ENCODE measurements at regions of chr18 and their contacts with region 1.

Region 1: GRCh38 chr18:72086421-72086820 is 457.7 kb downstream of the CBLN2 start:
- DNase-seq: no peak
- ATAC-seq: no peak
- H3K4me3 ChIP-seq: no peak overlapping the region
- H3K27ac ChIP-seq: no peak overlapping the region
- H3K4me1 ChIP-seq: no peaks in the 10 kb centered on the region
- H3K27me3 ChIP-seq: no peaks in the 10 kb centered on the region
- CTCF ChIP-seq: peak; percentile 19 to 40 (median 34); a peak in 2 of 6 replicates
- EP300 ChIP-seq: no peak
- POLR2A ChIP-seq: no peak
- RAD21 ChIP-seq: peak; percentile 36; the same call in 1 of the 2 replicates

Region 2: GRCh38 chr18:70781860-70782453 is 1304.5 kb before region 1 on chr18:
- CTCF ChIA-PET with region 1: no interaction called
- POLR2A ChIA-PET with region 1: no interaction called
- RAD21 ChIA-PET with region 1: no interaction called
- SMC1A ChIA-PET with region 1: no interaction called
- in situ Hi-C with region 1: no loop called
- intact Hi-C with region 1: loop called (anchors 5 kb)
- DNase-seq: peak; percentile 15
- ATAC-seq: peak; percentile 91
- H3K4me3 ChIP-seq: no peak overlapping the region
- H3K27ac ChIP-seq: no peak overlapping the region
- H3K4me1 ChIP-seq: no peaks in the 10 kb centered on the region
- H3K27me3 ChIP-seq: no peaks in the 10 kb centered on the region
- CTCF ChIP-seq: peak; percentile 65 to 70 (median 67)
- EP300 ChIP-seq: no peak
- POLR2A ChIP-seq: no peak
- RAD21 ChIP-seq: peak; percentile 67

Measured in GM12878 (cell line).